PC-3 (cell line): ENCODE measurements at regions of chrX and their contacts with region 1.

Region 1: GRCh38 chrX:75038925-75039324 is 113.7 kb upstream of the NEXMIF start:
- DNase-seq: peak; percentile 46
- ATAC-seq: peak; percentile 66
- H3K4me3 ChIP-seq: no peak overlapping the region
- H3K27ac ChIP-seq: no peak overlapping the region
- H3K4me1 ChIP-seq: no peaks in the 10 kb centered on the region
- H3K27me3 ChIP-seq: no peaks in the 10 kb centered on the region
- CTCF ChIP-seq: peak; percentile 54

Region 2: DNA sequence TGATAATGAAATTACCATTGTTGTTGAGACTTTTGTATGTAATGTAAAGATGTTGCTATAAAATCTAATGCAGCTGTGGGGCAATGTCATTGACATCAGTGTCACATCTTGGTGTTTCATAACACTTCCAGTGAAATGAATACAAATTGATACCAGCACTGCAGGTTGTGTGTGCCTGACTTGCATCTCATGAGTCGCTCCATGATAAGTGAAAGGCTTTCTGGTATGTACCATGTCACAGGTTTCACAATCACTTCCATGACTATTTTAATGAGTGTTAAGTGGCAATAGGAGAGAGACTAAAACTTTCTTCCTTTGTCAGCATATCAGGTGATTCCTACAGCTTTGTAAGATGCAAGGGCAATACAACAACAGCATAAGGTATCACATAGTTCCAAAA is 22.8 kb after region 1 on chrX:
- CTCF ChIA-PET with region 1: no interaction called
- POLR2A ChIA-PET with region 1: no interaction called
- intact Hi-C with region 1: no loop called
- DNase-seq: no peak
- ATAC-seq: no peak
- H3K4me3 ChIP-seq: no peak overlapping the region
- H3K27ac ChIP-seq: no peak overlapping the region
- H3K4me1 ChIP-seq: no peaks in the 10 kb centered on the region
- H3K27me3 ChIP-seq: no peaks in the 10 kb centered on the region
- CTCF ChIP-seq: no peak

Region 3: GRCh38 chrX:75156021-75156945 is 117.4 kb after region 1 on chrX and contains the start of gene ABCB7:
- CTCF ChIA-PET with region 1: no interaction called
- POLR2A ChIA-PET with region 1: no interaction called
- intact Hi-C with region 1: loop called (anchors 10 kb)
- DNase-seq: peak; percentile 75
- ATAC-seq: peak; percentile 94
- H3K4me3 ChIP-seq: peak within 1 kb of the TSS; percentile 85
- H3K27ac ChIP-seq: peak within 1 kb of the TSS; percentile 40
- H3K4me1 ChIP-seq: peaks cover 14% of the 10 kb centered on the region
- H3K27me3 ChIP-seq: no peaks in the 10 kb centered on the region
- CTCF ChIP-seq: no peak
- total RNA-seq, gene ABCB7: 34.6 and 36.2 TPM in 2 replicates

Region 4: GRCh38 chrX:75303795-75304194 is 264.9 kb after region 1 on chrX:
- CTCF ChIA-PET with region 1: no interaction called
- POLR2A ChIA-PET with region 1: no interaction called
- intact Hi-C with region 1: loop called (anchors 10 kb)
- DNase-seq: no peak
- ATAC-seq: no peak
- H3K4me3 ChIP-seq: no peak overlapping the region
- H3K27ac ChIP-seq: no peak overlapping the region
- H3K4me1 ChIP-seq: no peaks in the 10 kb centered on the region
- H3K27me3 ChIP-seq: no peaks in the 10 kb centered on the region
- CTCF ChIP-seq: no peak

Region 5: DNA sequence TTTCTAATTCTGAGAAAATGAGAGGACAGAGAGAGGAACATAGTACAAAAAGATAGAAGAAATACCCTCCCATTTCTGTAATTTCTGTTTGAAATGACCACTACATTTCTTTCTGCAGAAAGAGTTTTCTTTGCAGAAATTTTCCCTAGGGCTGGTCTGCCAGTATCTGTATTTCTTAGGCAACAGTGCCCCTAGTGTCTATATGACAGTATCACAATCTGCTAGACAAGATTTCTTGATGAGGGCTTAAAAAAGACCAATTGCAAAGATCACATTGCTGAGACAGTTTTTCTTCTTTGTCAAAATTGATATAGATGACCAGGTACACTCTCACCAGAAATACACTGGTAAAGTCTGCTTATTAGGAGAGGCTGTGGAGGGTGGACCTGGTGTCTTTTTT is 564.9 kb after region 1 on chrX:
- CTCF ChIA-PET with region 1: no interaction called
- POLR2A ChIA-PET with region 1: no interaction called
- intact Hi-C with region 1: loop called (anchors 10 kb)
- DNase-seq: peak; percentile 43
- ATAC-seq: no peak
- H3K4me3 ChIP-seq: no peak overlapping the region
- H3K27ac ChIP-seq: no peak overlapping the region
- H3K4me1 ChIP-seq: no peaks in the 10 kb centered on the region
- H3K27me3 ChIP-seq: no peaks in the 10 kb centered on the region
- CTCF ChIP-seq: peak; percentile 65